Activated T-helper 1 cell treated with anti-CD3 and anti-CD28 coated beads, Interleukin-12 subunit alpha, Interleukin-12 subunit beta, Interleukin-2, Interleukin-4 antibody, amounts not matched to agents 30 ng/mL and 10 ng/mL and 1 ng/mL, durations not matched to agents 14 hours and 24 hours and 36 hours (primary cell): ENCODE measurements at regions of chr10 and their contacts with region 1.

Region 1: GRCh38 chr10:3068201-3068967 is 1.0 kb downstream of the PFKP start:
- DNase-seq: peak; percentile 58
- H3K4me3 Mint-ChIP-seq: peak overlapping the region; percentile 90
- H3K27ac Mint-ChIP-seq: peak overlapping the region; percentile 88
- H3K4me1 Mint-ChIP-seq: peaks cover 43% of the 10 kb centered on the region
- H3K27me3 Mint-ChIP-seq: peaks cover 16% of the 10 kb centered on the region

Region 2: GRCh38 chr10:1643161-1643907 is 1425.0 kb before region 1 on chr10:
- intact Hi-C with region 1: loop called (anchors 10 kb)
- DNase-seq: peak; percentile 34
- H3K4me3 Mint-ChIP-seq: peak overlapping the region; percentile 28
- H3K27ac Mint-ChIP-seq: peak overlapping the region; percentile 92
- H3K4me1 Mint-ChIP-seq: peaks cover 17% of the 10 kb centered on the region
- H3K27me3 Mint-ChIP-seq: peaks cover 6% of the 10 kb centered on the region

Region 3: DNA sequence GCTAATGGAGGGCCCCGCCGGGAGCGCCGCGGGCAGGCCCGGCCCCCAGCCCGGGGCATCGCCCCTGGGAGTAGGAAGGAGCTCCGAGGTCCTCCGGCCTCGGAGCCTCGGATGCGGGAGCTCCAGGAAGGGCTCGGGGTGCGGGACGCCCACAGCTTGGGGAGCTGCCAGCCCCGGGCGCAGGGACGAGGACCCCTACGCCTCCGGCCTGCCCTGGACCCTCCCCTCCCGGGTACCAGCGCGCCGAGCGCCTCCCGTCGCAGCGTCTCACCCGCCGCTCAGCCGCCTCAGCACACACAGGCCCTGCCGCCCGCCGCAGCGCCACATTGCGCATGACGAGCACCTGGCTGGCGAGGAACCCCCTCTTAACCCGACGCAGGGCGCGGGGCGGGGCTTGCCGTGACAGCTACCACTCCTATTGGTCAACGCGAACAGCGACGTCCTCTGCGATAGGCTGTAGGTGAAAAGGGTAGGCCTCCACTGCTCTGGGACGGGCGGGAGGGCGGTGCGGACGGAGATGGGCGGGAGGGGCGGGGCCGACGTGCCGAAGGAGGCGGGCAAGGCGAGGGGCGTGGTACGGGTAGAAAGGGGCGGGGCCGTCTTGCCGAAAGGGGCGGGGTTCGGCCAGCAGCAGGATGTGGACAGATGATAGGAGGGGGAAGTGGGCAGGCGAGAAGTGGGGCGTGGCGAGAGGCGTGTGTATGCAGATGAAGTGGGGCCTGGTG is 104.2 kb after region 1 on chr10 and contains the start of gene PITRM1:
- intact Hi-C with region 1: loop called (anchors 1 kb)
- DNase-seq: peak; percentile 99
- H3K4me3 Mint-ChIP-seq: peak within 1 kb of the TSS; percentile 90
- H3K27ac Mint-ChIP-seq: peak within 1 kb of the TSS; percentile 88
- H3K4me1 Mint-ChIP-seq: peaks cover 9% of the 10 kb centered on the region
- H3K27me3 Mint-ChIP-seq: peaks cover 20% of the 10 kb centered on the region
- total RNA-seq, gene PITRM1: 76.3 and 80.4 TPM in 2 replicates